Posterior vena cava (tissue), 2 donors: ENCODE measurements at regions of chr11 and their contacts with region 1.

Region 1: GRCh38 chr11:69642913-69643632 is 2.1 kb downstream of the CCND1 start:
- DNase-seq: peak; percentile 94

Region 2: GRCh38 chr11:69296890-69297786 is 345.9 kb before region 1 on chr11:
- intact Hi-C with region 1: loop called (anchors 5 kb)
- DNase-seq: peak; percentile 99